ENCODE measurements at regions of chr11 and their contacts with region 1.

Region 1: DNA sequence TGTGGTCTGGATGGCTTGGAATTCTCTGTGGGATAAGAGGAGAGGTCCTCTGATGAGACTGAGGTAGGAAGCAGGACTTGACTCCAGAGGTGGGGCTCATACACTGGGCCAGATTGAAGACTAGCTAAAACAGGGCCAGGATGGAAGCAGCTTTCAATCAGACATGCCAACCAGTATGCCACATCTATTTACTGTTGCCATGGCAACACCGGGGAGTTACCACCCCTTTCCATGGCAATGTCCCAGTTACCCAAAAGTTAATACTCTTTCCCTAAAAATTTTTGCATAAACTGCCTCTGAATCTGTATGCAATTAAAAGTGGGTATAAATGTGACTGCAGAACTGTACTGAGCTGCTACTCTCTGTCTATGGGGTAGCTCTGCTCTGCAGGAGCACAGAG is 247.5 kb upstream of the ZBED5 start:
- DNase-seq: no peak
- ATAC-seq: no peak
- H3K4me3 ChIP-seq: no peak overlapping the region
- H3K27ac ChIP-seq: no peak overlapping the region
- H3K4me1 ChIP-seq: no peaks in the 10 kb centered on the region
- H3K27me3 ChIP-seq: no peaks in the 10 kb centered on the region
- CTCF ChIP-seq: no peak

Region 2: GRCh38 chr11:10899121-10899830 is 206.1 kb before region 1 on chr11:
- intact Hi-C with region 1: no loop called
- DNase-seq: peak; percentile 77
- ATAC-seq: peak; percentile 64
- H3K4me3 ChIP-seq: peak overlapping the region; percentile 25
- H3K27ac ChIP-seq: peak overlapping the region; percentile 90
- H3K4me1 ChIP-seq: peaks cover 37% of the 10 kb centered on the region
- H3K27me3 ChIP-seq: no peaks in the 10 kb centered on the region
- CTCF ChIP-seq: no peak

Region 3: DNA sequence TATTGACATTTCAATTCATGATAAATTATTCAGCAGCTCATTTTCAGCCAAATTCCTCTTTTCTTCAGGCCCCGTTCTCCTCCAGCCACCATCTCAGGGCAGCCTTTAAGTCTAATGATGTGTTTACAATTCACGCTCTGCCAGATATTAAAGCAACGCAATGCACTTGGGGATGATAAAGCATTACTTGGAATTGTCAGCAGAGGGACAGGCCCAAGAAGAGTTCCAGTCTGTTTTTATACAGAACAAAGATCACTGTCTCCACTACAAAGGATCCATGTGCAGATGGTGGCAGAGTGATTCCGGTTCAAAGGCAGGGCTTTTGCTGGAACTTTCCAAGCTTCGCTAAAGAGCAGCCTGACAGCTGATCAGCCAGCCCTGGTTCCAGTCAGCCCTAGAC is 530.1 kb after region 1 on chr11:
- intact Hi-C with region 1: loop called (anchors 5 kb)
- DNase-seq: no peak
- ATAC-seq: no peak
- H3K4me3 ChIP-seq: no peak overlapping the region
- H3K27ac ChIP-seq: no peak overlapping the region
- H3K4me1 ChIP-seq: no peaks in the 10 kb centered on the region
- H3K27me3 ChIP-seq: no peaks in the 10 kb centered on the region
- CTCF ChIP-seq: no peak